ENCODE measurements at regions of chr20 and their contacts with region 1.

Region 1: DNA sequence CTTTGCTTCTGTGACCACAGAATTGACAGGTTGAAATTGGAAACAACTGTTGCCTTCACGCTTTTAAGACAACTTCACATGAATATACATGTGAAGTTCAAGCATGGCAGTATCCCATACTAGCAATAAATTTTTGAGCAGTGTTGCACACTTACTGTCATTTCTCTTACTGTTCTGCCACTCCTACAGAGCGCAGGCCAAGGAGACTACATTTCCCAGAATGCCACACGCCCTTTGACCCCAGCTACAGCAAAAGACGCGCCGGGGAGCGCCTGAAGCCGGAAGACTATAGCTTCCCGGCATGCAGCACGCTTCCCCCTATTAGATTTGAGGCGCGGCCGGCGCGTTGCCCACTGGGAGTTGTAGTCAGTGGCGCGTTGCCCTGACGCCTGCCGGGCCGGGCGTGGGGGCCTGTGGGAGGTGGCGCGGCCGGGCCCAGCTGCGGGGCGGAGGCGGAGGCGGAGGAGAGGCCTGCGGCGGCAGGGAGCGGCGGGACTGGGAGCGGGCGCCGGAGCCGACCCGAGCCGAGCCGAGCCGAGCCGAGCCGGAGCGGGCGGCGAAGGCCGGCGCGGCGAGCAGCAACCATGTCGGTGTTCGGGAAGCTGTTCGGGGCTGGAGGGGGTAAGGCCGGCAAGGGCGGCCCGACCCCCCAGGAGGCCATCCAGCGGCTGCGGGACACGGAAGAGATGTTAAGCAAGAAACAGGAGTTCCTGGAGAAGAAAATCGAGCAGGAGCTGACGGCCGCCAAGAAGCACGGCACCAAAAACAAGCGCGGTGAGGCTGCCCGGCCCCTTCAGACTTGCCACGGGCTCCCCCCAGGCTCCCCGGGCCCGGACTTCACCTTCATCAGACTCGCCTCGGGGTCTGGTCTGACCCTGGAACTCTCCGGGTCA is at the start of gene CHMP4B:
- DNase-seq: peak; percentile 97 to 99 (median 98)
- ATAC-seq: peak; percentile 95
- H3K4me3 ChIP-seq: peak within 1 kb of the TSS; percentile 83
- H3K4me3 Mint-ChIP-seq: peak within 1 kb of the TSS; percentile 100
- H3K27ac ChIP-seq: peak within 1 kb of the TSS; percentile 38 to 66
- H3K27ac Mint-ChIP-seq: peak within 1 kb of the TSS; percentile 93
- H3K4me1 ChIP-seq: peaks cover 45% of the 10 kb centered on the region
- H3K4me1 Mint-ChIP-seq: peaks cover 49% of the 10 kb centered on the region
- H3K27me3 ChIP-seq: no peaks in the 10 kb centered on the region
- H3K27me3 Mint-ChIP-seq: no peaks in the 10 kb centered on the region
- CTCF ChIP-seq: no peak
- total RNA-seq, gene CHMP4B: 44.2 to 49.3 TPM

Region 2: GRCh38 chr20:33443512-33444239 is 367.5 kb before region 1 on chr20 and contains the start of gene SNTA1:
- CTCF ChIA-PET with region 1: no interaction called
- POLR2A ChIA-PET with region 1: no interaction called
- intact Hi-C with region 1: loop called in 1 of 2 experiments (anchors 5 kb)
- DNase-seq: peak; percentile 74 to 95 (median 86)
- ATAC-seq: peak; percentile 57
- H3K4me3 ChIP-seq: peak within 1 kb of the TSS; percentile 90
- H3K4me3 Mint-ChIP-seq: peak within 1 kb of the TSS; percentile 95
- H3K27ac ChIP-seq: peak within 1 kb of the TSS; percentile 72 to 80
- H3K27ac Mint-ChIP-seq: peak within 1 kb of the TSS; percentile 94
- H3K4me1 ChIP-seq: peaks cover 25% of the 10 kb centered on the region
- H3K4me1 Mint-ChIP-seq: peaks cover 22% of the 10 kb centered on the region
- H3K27me3 ChIP-seq: no peaks in the 10 kb centered on the region
- H3K27me3 Mint-ChIP-seq: no peaks in the 10 kb centered on the region
- CTCF ChIP-seq: no peak
- total RNA-seq, gene SNTA1: 5.0 to 5.2 TPM

Region 3: DNA sequence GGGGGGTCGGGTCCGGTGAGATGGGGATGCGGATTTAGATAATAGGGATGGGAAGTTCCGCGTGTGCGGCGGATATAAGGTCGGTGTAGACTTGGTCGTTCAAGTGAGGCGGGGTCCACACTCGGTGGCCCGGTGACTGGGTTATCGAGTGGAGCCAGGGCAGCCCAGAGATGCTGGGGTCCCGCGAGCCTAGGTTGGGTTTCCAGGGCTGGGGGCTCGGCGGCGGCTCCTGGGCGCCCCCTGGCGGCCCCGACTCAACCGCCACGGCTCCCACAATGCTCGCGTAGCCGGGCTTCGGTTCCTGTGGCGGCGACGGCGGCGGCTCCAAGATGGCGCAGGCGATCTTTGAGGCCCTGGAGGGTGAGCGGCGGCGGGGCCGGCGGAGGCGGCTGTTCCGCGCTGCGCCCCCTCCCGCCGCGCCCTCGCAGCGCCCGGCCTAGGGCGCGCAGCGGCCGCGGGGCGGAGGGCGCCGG is 79.4 kb before region 1 on chr20 and contains the start of gene ZNF341:
- CTCF ChIA-PET with region 1: no interaction called
- POLR2A ChIA-PET with region 1: interaction called, 10 read pairs
- intact Hi-C with region 1: loop called in 1 of 2 experiments (anchors 2 kb)
- DNase-seq: peak in 13 of 14 experiments; percentile 80 to 96 (median 87)
- ATAC-seq: peak; percentile 83
- H3K4me3 ChIP-seq: peak within 1 kb of the TSS; percentile 85
- H3K4me3 Mint-ChIP-seq: peak within 1 kb of the TSS; percentile 93
- H3K27ac ChIP-seq: peak within 1 kb of the TSS; percentile 57 to 70
- H3K27ac Mint-ChIP-seq: peak within 1 kb of the TSS; percentile 96
- H3K4me1 ChIP-seq: peaks cover 28% of the 10 kb centered on the region
- H3K4me1 Mint-ChIP-seq: peaks cover 22% of the 10 kb centered on the region
- H3K27me3 ChIP-seq: no peaks in the 10 kb centered on the region
- H3K27me3 Mint-ChIP-seq: no peaks in the 10 kb centered on the region
- CTCF ChIP-seq: peak; percentile 76
- total RNA-seq, gene ZNF341: 2.1 to 2.7 TPM

Region 4: DNA sequence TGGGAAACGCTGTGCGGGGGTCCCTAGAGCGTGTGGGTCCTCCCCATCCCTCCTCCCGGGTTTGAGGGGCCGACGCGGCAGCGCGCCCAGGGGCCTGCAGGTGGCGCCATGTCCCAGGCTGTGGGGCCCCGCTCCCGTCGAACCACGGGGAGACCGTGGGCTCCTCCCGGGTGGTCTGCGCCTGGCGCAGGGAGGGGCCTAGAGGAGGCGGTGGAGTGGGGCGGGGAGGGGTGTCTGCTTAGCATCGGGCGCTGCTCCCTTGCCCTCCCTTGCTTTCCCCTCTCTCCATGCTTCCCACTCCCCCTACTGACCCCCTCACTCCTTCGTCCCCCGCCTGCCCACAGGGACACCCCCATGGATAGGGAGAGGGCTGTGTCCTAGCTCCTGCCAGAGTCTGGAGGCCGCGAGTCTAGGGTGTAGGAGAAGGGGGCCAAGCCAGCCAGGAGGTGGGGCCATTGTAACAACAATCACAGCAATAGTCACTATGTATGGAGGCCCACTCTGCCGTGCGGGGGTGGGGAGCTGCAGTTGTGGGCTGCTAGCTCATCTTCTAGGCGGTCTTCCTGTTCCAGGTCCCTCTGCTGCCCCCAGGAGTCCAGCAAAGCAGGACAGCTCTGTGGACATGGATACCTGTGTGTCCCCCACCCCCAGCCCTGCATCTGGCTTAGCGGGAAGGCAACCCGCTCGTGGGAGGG is 51.7 kb after region 1 on chr20:
- CTCF ChIA-PET with region 1: no interaction called
- POLR2A ChIA-PET with region 1: interaction called, 15 read pairs
- intact Hi-C with region 1: loop called in 1 of 2 experiments (anchors 5 kb)
- DNase-seq: peak in 13 of 14 experiments; percentile 18 to 65 (median 37)
- ATAC-seq: peak; percentile 37
- H3K4me3 ChIP-seq: no peak overlapping the region
- H3K4me3 Mint-ChIP-seq: no peak overlapping the region
- H3K27ac ChIP-seq: no peak overlapping the region
- H3K27ac Mint-ChIP-seq: no peak overlapping the region
- H3K4me1 ChIP-seq: peaks cover 32% of the 10 kb centered on the region
- H3K4me1 Mint-ChIP-seq: peaks cover 31% of the 10 kb centered on the region
- H3K27me3 ChIP-seq: no peaks in the 10 kb centered on the region
- H3K27me3 Mint-ChIP-seq: no peaks in the 10 kb centered on the region
- CTCF ChIP-seq: peak; percentile 62

Region 5: GRCh38 chr20:35092524-35093266 is 1281.6 kb after region 1 on chr20 and contains the start of gene TRPC4AP:
- CTCF ChIA-PET with region 1: interaction called, 3 read pairs
- POLR2A ChIA-PET with region 1: no interaction called
- intact Hi-C with region 1: loop called in 1 of 2 experiments (anchors 10 kb)
- DNase-seq: peak; percentile 78 to 96 (median 86)
- ATAC-seq: peak; percentile 98
- H3K4me3 ChIP-seq: peak within 1 kb of the TSS; percentile 99
- H3K4me3 Mint-ChIP-seq: peak within 1 kb of the TSS; percentile 91
- H3K27ac ChIP-seq: peak within 1 kb of the TSS; percentile 72 to 76
- H3K27ac Mint-ChIP-seq: peak within 1 kb of the TSS; percentile 83
- H3K4me1 ChIP-seq: peaks cover 40% of the 10 kb centered on the region
- H3K4me1 Mint-ChIP-seq: peaks cover 53% of the 10 kb centered on the region
- H3K27me3 ChIP-seq: no peaks in the 10 kb centered on the region
- H3K27me3 Mint-ChIP-seq: no peaks in the 10 kb centered on the region
- CTCF ChIP-seq: peak; percentile 85
- total RNA-seq, gene TRPC4AP: 56.3 to 60.6 TPM

Measured in CD4-positive, alpha-beta T cell (primary cell).